Endothelial cell of umbilical vein (primary cell): ENCODE measurements at regions of chr1 and their contacts with region 1.

Region 1: GRCh38 chr1:37890378-37891014 is 31.1 kb upstream of the MTF1 start:
- DNase-seq: peak; percentile 54
- H3K4me3 ChIP-seq: no peak overlapping the region
- H3K27ac ChIP-seq: no peak overlapping the region
- H3K4me1 ChIP-seq: no peaks in the 10 kb centered on the region
- H3K27me3 ChIP-seq: no peaks in the 10 kb centered on the region
- CTCF ChIP-seq: peak; percentile 25 to 29
- POLR2A ChIP-seq: no peak

Region 2: DNA sequence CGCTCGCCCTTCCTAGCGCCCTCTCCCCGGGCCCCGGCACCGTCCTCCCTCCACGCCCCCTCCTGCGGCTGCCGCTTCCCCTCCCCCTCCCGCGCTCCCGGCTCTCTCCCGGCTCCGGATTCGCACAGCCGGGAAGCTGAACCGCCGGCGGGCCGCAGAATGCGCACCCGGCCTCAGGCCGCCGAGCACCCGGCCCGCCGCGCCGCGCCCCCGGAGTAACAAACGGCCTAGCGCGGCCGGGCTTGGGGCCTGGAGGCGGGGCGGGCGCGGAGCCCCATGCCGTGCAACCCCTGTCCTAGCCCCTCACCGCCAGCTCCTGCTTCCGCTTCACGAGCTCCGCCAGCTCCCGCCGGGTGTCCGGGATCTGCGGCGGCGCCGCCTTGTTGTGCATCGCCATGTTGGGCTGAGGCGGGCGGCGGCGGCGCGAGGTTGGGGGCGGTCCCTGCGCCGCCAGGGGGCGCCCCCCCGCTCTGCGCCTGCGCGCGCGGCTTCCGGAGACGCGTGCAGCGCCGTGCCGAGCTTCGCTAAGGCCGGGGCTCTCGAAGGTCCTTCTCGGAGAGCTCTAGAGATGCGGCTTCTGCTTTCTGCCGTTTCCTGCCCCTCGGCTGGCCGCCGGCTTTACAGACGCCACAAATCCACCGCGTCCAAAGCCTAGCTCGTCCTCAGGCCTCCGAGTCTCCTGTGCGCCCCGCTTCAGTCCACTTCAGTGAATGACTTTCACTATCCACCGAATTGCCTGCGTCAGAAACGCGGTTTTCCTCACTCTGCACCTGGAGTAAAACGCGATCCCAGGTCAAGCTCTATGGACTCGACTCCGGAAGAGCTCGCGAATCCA is 375.9 kb before region 1 on chr1 and contains the start of gene MEAF6:
- CTCF ChIA-PET with region 1: no interaction called
- POLR2A ChIA-PET with region 1: no interaction called
- dilution Hi-C with region 1: no loop called
- intact Hi-C with region 1: no loop called
- DNase-seq: peak; percentile 85
- H3K4me3 ChIP-seq: peak within 1 kb of the TSS; percentile 72 to 81 (median 80)
- H3K27ac ChIP-seq: peak within 1 kb of the TSS; percentile 87
- H3K4me1 ChIP-seq: peaks cover 15% of the 10 kb centered on the region
- H3K27me3 ChIP-seq: no peaks in the 10 kb centered on the region
- CTCF ChIP-seq: peak; percentile 53 to 91
- POLR2A ChIP-seq: peak; percentile 63
- total RNA-seq, gene MEAF6: 50.5 and 62.5 TPM in 2 replicates

Region 3: GRCh38 chr1:37741130-37741529 is 149.4 kb before region 1 on chr1:
- CTCF ChIA-PET with region 1: no interaction called
- POLR2A ChIA-PET with region 1: no interaction called
- dilution Hi-C with region 1: no loop called
- intact Hi-C with region 1: no loop called
- DNase-seq: no peak
- H3K4me3 ChIP-seq: no peak overlapping the region
- H3K27ac ChIP-seq: no peak overlapping the region
- H3K4me1 ChIP-seq: no peaks in the 10 kb centered on the region
- H3K27me3 ChIP-seq: peaks cover 0 to 2% of the 10 kb centered on the region in 2 experiments
- CTCF ChIP-seq: no peak
- POLR2A ChIP-seq: no peak

Region 4: DNA sequence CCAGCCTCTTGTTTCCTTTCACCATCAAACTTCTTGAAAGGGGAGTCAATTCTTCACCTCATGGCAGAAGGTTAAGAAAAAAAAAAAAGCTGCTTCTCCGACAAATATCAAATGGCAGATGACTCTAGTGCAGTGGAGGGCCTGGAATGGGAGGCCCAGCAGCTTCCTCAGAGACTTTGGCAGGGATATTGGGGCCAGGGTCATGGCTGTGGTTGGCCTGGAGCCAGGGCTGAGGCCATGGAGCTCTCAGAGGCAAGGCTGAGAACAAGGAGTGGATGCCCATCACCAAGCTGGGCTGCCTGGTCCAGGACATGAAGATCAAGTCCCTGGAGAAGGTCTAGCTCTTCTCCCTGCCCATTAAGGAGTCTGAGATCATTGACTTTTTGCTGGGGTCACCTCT is 49.8 kb before region 1 on chr1:
- CTCF ChIA-PET with region 1: no interaction called
- POLR2A ChIA-PET with region 1: no interaction called
- dilution Hi-C with region 1: no loop called
- intact Hi-C with region 1: no loop called
- DNase-seq: no peak
- H3K4me3 ChIP-seq: no peak overlapping the region
- H3K27ac ChIP-seq: no peak overlapping the region
- H3K4me1 ChIP-seq: no peaks in the 10 kb centered on the region
- H3K27me3 ChIP-seq: no peaks in the 10 kb centered on the region
- CTCF ChIP-seq: no peak
- POLR2A ChIP-seq: no peak

Region 5: GRCh38 chr1:37946703-37947360 is 56.3 kb after region 1 on chr1 and contains the start of gene INPP5B:
- CTCF ChIA-PET with region 1: no interaction called
- POLR2A ChIA-PET with region 1: no interaction called
- dilution Hi-C with region 1: no loop called
- intact Hi-C with region 1: loop called (anchors 5 kb)
- DNase-seq: peak; percentile 83
- H3K4me3 ChIP-seq: peak within 1 kb of the TSS; percentile 42 to 52 (median 49)
- H3K27ac ChIP-seq: peak within 1 kb of the TSS; percentile 93
- H3K4me1 ChIP-seq: peaks cover 12% of the 10 kb centered on the region
- H3K27me3 ChIP-seq: no peaks in the 10 kb centered on the region
- CTCF ChIP-seq: no peak
- POLR2A ChIP-seq: peak; percentile 13
- total RNA-seq, gene INPP5B: 13.5 and 14.7 TPM in 2 replicates

Region 6: GRCh38 chr1:37978541-37978940 is 88.0 kb after region 1 on chr1:
- CTCF ChIA-PET with region 1: interaction called, 4 read pairs
- POLR2A ChIA-PET with region 1: no interaction called
- dilution Hi-C with region 1: no loop called
- intact Hi-C with region 1: loop called (anchors 1 kb)
- DNase-seq: no peak
- H3K4me3 ChIP-seq: no peak overlapping the region
- H3K27ac ChIP-seq: no peak overlapping the region
- H3K4me1 ChIP-seq: no peaks in the 10 kb centered on the region
- H3K27me3 ChIP-seq: no peaks in the 10 kb centered on the region
- CTCF ChIP-seq: no peak
- POLR2A ChIP-seq: no peak

Region 7: GRCh38 chr1:38018864-38019343 is 128.4 kb after region 1 on chr1:
- CTCF ChIA-PET with region 1: no interaction called
- POLR2A ChIA-PET with region 1: no interaction called
- dilution Hi-C with region 1: no loop called
- intact Hi-C with region 1: loop called (anchors 1 kb)
- DNase-seq: peak; percentile 28
- H3K4me3 ChIP-seq: no peak overlapping the region
- H3K27ac ChIP-seq: no peak overlapping the region
- H3K4me1 ChIP-seq: peaks cover 32% of the 10 kb centered on the region
- H3K27me3 ChIP-seq: no peaks in the 10 kb centered on the region
- CTCF ChIP-seq: peak; percentile 49 to 55
- POLR2A ChIP-seq: no peak